Activated CD8-positive, alpha-beta T cell treated with anti-CD3 and anti-CD28 coated beads, Interleukin-2, amount 10 ng/mL, durations not matched to agents 7 days and 5 days (primary cell): ENCODE measurements at regions of chr16 and their contacts with region 1.

Region 1: DNA sequence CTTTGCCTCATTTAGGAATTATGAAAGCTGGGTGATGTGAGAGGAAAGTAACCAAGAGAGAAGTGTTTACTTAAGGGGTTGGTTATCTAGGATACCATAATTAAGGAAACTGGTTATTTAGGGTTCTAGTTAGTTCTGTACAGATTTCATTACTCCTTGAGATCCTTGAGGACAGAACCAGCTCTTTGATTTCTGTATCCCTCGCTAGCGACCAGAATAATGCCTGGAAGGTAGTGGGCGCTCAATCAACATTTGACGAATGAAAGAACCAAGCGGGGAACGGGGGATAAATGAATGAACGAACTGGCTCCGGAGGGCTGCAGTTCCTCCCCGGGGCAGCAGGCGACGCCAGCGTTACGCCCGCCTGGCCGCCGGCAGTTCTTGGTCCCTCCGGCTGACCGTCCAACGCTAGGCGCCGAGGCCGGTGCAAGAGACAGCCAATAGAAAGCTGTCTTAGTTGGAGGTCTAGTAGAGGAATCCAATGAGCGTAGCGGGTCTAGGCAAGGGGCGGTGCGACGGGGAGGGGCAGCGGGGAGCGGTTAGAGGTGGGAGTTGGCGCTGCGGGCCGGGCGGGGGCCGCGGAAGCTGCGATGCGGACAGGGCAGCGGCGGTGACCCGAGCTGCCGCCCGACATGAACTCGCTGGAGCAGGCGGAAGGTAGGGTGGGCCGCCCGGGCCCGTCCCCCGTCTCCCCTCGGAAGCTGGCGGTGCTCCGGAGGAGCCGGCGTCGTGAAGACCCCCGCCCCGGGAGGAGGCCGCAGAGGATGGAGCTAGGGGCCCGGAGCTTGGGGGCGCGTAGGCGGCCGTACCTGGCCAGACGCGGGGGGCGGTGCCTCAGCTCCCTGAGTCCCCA is at the start of gene CNEP1R1:
- DNase-seq: peak; percentile 95
- ATAC-seq: peak; percentile 99
- H3K4me3 Mint-ChIP-seq: peak within 1 kb of the TSS; percentile 94
- H3K27ac Mint-ChIP-seq: peak within 1 kb of the TSS; percentile 92
- H3K4me1 Mint-ChIP-seq: peaks cover 14% of the 10 kb centered on the region
- H3K27me3 Mint-ChIP-seq: peaks cover 4% of the 10 kb centered on the region
- total RNA-seq, gene CNEP1R1: 25.1 to 26.9 TPM

Region 2: GRCh38 chr16:50038756-50039529 is 14.0 kb after region 1 on chr16:
- CTCF ChIA-PET with region 1: interaction called, 54 read pairs
- POLR2A ChIA-PET with region 1: interaction called, 4 read pairs
- DNase-seq: no peak
- ATAC-seq: no peak
- H3K4me3 Mint-ChIP-seq: no peak overlapping the region
- H3K27ac Mint-ChIP-seq: peak overlapping the region; percentile 22
- H3K4me1 Mint-ChIP-seq: peaks cover 12% of the 10 kb centered on the region
- H3K27me3 Mint-ChIP-seq: peaks cover 10% of the 10 kb centered on the region

Region 3: DNA sequence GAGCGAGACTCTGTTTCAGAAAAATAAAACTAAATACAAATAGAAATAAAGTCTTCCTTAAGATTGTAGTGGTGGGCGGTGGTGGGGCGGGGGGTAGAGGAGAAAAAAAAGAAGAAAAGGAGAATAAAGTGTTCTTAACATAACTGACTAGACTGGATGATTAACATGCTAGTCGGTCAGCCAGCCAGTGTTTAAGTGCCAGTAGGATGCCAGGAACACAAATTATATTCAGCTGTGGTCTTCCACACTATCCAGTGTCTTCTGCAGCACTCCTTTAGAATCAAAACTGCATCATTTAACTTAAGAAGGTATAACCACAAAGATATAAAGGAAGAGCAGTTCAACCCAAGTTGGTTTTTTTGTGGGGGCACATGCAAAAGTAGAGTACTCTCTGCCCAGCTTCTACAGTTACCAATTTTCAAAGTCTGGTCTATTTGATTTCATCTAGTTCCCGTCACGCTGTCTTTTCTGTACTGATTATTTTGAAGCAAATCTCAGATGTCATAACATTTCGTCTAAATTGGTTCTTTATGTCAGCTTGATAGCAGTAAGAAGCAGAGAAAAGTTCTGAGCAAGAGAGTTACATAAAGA is 56.6 kb after region 1 on chr16:
- CTCF ChIA-PET with region 1: interaction called, 14 read pairs
- POLR2A ChIA-PET with region 1: no interaction called
- DNase-seq: no peak
- ATAC-seq: no peak
- H3K4me3 Mint-ChIP-seq: no peak overlapping the region
- H3K27ac Mint-ChIP-seq: peak overlapping the region; percentile 47
- H3K4me1 Mint-ChIP-seq: peaks cover 15% of the 10 kb centered on the region
- H3K27me3 Mint-ChIP-seq: no peaks in the 10 kb centered on the region

Region 4: DNA sequence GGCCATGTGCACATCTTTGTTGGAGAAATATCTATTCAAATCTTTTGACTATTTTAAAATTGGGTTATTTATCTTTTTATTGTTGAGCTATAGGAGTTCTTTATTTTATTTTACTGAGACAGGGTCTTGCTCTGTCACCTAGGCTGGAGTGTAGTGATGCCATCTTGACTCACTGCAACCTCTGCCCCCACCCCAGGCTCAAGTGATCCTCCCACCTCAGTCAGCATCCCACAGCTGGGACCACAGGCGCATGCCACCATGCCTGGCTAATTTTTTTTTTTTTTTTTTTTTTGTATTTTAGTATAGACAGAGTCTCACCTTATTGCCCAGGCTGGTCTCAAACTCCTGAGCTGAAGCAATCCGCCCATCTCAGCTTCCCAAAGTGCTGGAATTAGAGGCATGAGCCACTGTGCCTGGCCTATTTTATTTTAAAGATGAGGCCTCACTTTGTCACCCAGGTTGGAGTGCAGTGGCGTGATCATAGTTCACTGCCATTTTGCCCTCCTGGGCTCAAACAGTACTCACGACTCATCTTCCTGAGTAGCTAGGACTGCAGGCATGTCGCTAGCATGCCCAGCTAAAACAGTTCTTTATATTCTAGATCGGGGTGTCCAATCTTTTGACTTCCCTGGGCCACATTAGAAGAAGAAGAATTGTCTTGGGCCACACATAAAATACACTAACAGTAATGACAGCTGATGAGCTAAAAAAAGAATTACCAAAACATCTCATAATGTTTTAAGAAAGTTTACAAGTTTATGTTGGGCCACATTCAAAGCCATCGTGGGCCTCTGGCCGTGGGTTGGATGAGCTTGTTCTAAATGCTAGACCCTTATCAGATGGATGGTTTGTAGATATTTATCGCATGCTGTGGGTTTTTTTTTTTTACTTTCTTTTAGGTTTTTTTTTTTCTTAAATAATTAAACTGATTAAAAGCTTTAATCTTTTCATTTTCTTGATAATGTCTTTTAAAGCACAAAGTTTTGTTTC is 141.9 kb after region 1 on chr16:
- CTCF ChIA-PET with region 1: interaction called, 13 read pairs
- POLR2A ChIA-PET with region 1: interaction called, 5 read pairs
- DNase-seq: no peak
- ATAC-seq: peak; percentile 62
- H3K4me3 Mint-ChIP-seq: no peak overlapping the region
- H3K27ac Mint-ChIP-seq: peak overlapping the region; percentile 53
- H3K4me1 Mint-ChIP-seq: peaks cover 49% of the 10 kb centered on the region
- H3K27me3 Mint-ChIP-seq: no peaks in the 10 kb centered on the region

Region 5: GRCh38 chr16:50273681-50274325 is 248.9 kb after region 1 on chr16:
- CTCF ChIA-PET with region 1: interaction called, 23 read pairs
- POLR2A ChIA-PET with region 1: interaction called, 5 read pairs
- DNase-seq: peak; percentile 68
- ATAC-seq: peak; percentile 46
- H3K4me3 Mint-ChIP-seq: peak overlapping the region; percentile 79
- H3K27ac Mint-ChIP-seq: peak overlapping the region; percentile 98
- H3K4me1 Mint-ChIP-seq: peaks cover 98% of the 10 kb centered on the region
- H3K27me3 Mint-ChIP-seq: no peaks in the 10 kb centered on the region

Region 6: DNA sequence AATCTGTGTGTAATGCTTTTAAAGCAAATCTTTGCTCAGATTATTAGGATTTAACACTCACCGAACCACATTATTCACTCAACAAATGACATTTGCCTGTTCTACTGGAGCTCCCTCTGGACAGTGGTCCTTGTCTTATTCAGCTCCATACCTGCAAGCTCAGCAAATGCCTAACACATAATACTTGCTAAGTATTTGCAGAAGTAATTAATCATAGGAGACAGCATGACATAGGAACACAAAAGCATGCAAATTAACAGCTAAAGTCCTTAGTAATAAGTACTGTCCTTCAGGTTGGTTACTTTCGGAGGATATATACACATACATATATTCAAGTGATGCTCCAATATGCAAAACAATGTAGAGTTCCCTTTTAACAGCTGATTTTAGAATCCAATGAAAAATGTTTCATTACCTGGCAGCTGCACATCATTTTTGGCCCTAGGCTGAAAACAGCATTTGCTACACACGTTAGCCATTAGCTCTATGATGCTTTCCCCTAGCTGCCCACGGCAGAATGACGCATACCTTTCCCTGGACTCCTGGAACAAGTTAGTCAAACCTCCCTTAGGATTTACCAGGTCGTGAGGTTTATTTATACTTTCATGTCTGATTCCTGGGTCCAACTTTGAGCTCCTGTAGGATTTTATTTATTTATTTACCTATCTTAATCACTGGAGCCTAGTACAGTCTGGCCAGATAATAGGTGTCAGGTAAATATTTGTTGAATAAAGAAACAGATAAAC is 335.3 kb after region 1 on chr16:
- CTCF ChIA-PET with region 1: interaction called, 27 read pairs
- POLR2A ChIA-PET with region 1: interaction called, 3 read pairs
- DNase-seq: no peak
- ATAC-seq: no peak
- H3K4me3 Mint-ChIP-seq: no peak overlapping the region
- H3K27ac Mint-ChIP-seq: peak overlapping the region; percentile 9
- H3K4me1 Mint-ChIP-seq: peaks cover 41% of the 10 kb centered on the region
- H3K27me3 Mint-ChIP-seq: no peaks in the 10 kb centered on the region